PC-3 (cell line): ENCODE measurements at regions of chr19 and their contacts with region 1.

Region 1: GRCh38 chr19:10478903-10479384 is 24.2 kb downstream of the KEAP1 start:
- DNase-seq: peak; percentile 59
- ATAC-seq: peak; percentile 70
- H3K4me3 ChIP-seq: no peak overlapping the region
- H3K27ac ChIP-seq: no peak overlapping the region
- H3K4me1 ChIP-seq: no peaks in the 10 kb centered on the region
- H3K27me3 ChIP-seq: no peaks in the 10 kb centered on the region
- CTCF ChIP-seq: peak; percentile 32; the same call in 1 of the 2 replicates

Region 2: GRCh38 chr19:10403137-10404021 is 75.6 kb before region 1 on chr19 and contains the start of gene CDC37:
- CTCF ChIA-PET with region 1: no interaction called
- POLR2A ChIA-PET with region 1: no interaction called
- intact Hi-C with region 1: loop called (anchors 2 kb)
- DNase-seq: peak; percentile 99
- ATAC-seq: peak; percentile 83
- H3K4me3 ChIP-seq: peak within 1 kb of the TSS; percentile 98
- H3K27ac ChIP-seq: peak within 1 kb of the TSS; percentile 17
- H3K4me1 ChIP-seq: peaks cover 21% of the 10 kb centered on the region
- H3K27me3 ChIP-seq: no peaks in the 10 kb centered on the region
- CTCF ChIP-seq: no peak
- total RNA-seq, gene CDC37: 560 and 709 TPM in 2 replicates

Region 3: DNA sequence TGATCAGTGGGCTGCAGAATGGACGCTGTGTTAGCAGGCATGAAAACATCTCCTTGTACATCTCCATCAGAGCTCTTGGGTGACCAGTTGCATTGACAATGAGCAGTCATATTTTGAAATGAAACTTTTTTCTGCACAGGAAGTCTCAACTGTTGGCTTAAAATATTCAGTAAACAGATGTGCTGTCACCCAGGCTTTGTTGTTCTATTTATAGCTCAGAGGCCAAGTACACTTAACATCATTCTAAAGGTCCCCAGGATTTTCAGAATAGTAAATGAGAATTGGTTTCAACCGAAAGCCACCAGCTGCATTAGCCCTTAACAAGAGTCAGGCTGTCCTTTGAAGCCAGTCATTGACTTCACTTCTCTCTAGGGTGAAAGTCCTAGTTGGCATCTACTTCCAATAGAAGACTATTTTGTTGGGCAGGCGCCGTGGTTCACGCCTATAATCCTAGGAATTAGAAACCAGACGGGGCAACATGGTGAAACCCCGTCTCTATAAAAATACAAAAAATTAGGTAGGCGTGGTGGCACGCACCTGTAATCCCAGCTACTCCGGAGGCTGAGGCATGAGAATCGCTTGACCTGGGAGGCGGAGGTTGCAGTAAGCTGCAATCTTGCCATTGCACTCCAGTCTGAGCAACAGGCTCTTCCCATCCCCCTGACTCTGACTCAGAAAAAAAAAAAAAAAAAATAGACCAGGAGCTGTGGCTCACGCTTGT is 66.5 kb before region 1 on chr19:
- CTCF ChIA-PET with region 1: no interaction called
- POLR2A ChIA-PET with region 1: interaction called, 13 read pairs
- intact Hi-C with region 1: no loop called
- DNase-seq: no peak
- ATAC-seq: no peak
- H3K4me3 ChIP-seq: no peak overlapping the region
- H3K27ac ChIP-seq: no peak overlapping the region
- H3K4me1 ChIP-seq: peaks cover 6% of the 10 kb centered on the region; the same call in 1 of the 2 replicates
- H3K27me3 ChIP-seq: peaks cover 5% of the 10 kb centered on the region
- CTCF ChIP-seq: no peak

Region 4: DNA sequence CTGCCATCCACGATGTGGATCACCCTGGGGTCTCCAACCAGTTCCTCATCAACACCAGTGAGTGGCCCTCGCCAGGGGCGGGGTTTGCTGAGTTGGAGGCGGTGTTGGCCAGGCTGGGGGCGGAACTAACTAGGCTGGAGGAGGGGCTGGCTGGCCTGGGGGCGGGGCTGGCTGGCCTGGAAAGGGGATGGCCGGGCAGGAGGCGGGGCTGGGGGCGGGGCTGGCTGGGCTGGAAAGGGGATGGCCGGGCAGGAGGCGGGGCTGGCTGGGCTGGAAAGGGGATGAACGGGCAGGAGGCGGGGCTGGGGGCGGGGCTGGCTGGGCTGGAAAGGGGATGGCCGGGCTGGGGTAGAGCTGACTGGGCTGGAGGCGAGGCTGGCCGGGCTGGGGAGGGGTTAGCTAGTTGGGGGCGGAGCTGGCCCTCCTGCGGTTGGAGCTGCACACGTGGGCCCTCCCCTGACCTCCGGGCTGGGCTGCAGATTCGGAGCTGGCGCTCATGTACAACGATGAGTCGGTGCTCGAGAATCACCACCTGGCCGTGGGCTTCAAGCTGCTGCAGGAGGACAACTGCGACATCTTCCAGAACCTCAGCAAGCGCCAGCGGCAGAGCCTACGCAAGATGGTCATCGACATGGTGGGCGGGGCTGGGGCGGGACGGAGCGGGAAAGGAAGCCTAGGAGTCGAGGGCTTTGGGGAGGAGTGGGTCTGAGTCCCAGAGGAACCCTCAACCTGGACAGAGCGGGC is 17.7 kb before region 1 on chr19:
- CTCF ChIA-PET with region 1: interaction called, 13 read pairs
- POLR2A ChIA-PET with region 1: no interaction called
- intact Hi-C with region 1: no loop called
- DNase-seq: peak; percentile 94
- ATAC-seq: peak; percentile 100
- H3K4me3 ChIP-seq: peak overlapping the region; percentile 47; the same call in 1 of the 2 replicates
- H3K27ac ChIP-seq: no peak overlapping the region
- H3K4me1 ChIP-seq: 0 out of 2 replicates have a peak, but pooled peaks cover 5% of the 10 kb centered on the region
- H3K27me3 ChIP-seq: no peaks in the 10 kb centered on the region
- CTCF ChIP-seq: no peak

Region 5: DNA sequence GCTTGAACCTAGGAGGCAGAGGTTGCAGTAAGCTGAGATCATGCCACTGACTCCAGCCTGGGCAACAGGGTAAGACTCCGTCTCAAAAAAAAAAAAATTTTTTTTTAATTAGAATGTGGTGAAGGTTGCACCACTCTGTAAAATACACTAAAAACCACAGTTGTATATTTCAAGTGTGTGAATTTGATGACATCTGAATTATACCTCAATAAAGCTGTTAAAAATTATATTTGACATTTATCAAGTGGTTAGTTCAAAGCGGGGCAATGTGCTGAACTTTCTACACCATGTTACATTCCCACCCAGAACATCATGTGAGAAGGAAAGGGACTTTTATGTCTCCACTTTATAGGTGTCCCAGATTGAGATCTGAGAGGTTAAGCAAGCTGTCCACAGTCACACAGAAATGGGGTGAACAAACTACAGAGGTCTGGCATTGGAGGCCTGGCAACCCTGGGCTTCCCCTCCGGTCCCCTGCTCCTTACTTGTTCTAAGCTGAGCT is 44.2 kb after region 1 on chr19:
- CTCF ChIA-PET with region 1: no interaction called
- POLR2A ChIA-PET with region 1: interaction called, 28 read pairs
- intact Hi-C with region 1: no loop called
- DNase-seq: no peak
- ATAC-seq: no peak
- H3K4me3 ChIP-seq: no peak overlapping the region
- H3K27ac ChIP-seq: no peak overlapping the region
- H3K4me1 ChIP-seq: peaks cover 7% of the 10 kb centered on the region; the same call in 1 of the 2 replicates
- H3K27me3 ChIP-seq: no peaks in the 10 kb centered on the region
- CTCF ChIP-seq: no peak

Region 6: DNA sequence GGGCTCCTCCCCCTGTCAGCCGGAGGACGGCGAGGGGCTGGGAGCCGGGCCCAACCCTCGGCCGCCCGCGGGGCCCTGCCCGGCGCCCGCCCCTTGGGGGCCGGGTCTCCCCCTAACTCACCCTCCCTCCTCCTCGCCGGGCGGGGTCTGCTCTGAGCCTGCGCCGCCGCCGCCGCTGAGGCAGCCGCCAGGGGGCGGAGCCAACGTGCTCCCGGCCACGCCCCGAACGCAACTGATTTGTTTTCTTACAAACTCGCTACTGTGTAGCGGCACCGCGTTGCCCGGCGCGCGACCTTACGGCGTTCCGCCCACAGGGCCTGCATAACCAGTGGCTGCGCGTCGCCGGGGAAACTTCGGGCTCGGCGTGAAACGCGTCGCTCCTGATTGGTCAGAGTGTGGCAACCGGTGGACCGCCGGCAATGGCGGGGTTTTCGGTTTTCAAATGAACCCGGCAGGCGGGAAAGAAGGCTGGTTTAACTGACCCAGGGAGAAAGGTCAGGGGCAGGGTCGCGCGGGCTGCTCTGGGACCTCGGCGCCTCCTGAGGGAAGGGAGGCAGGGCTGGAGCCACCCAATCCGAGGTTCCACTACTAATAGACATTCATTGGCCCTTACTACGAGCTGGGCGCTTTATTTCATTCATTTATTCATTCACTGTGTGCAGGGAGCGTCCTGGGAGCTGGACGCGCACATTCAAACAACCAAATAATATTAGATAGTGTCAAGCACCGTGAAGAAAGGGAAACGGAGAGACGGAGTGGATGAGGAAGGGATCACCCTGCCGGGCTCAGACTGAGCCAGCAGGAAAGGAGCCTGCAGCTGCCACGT is 90.1 kb after region 1 on chr19 and contains the start of gene CDKN2D:
- CTCF ChIA-PET with region 1: no interaction called
- POLR2A ChIA-PET with region 1: no interaction called
- intact Hi-C with region 1: loop called (anchors 1 kb)
- DNase-seq: peak; percentile 100
- ATAC-seq: peak; percentile 87
- H3K4me3 ChIP-seq: peak within 1 kb of the TSS; percentile 72
- H3K27ac ChIP-seq: peak within 1 kb of the TSS; percentile 84
- H3K4me1 ChIP-seq: peaks cover 32% of the 10 kb centered on the region
- H3K27me3 ChIP-seq: no peaks in the 10 kb centered on the region
- CTCF ChIP-seq: no peak
- total RNA-seq, gene CDKN2D: 17.1 and 22.5 TPM in 2 replicates

Region 7: GRCh38 chr19:10644260-10645007 is 165.5 kb after region 1 on chr19:
- CTCF ChIA-PET with region 1: no interaction called
- POLR2A ChIA-PET with region 1: interaction called, 6 read pairs
- intact Hi-C with region 1: loop called (anchors 10 kb)
- DNase-seq: peak; percentile 83
- ATAC-seq: peak; percentile 98
- H3K4me3 ChIP-seq: no peak overlapping the region
- H3K27ac ChIP-seq: no peak overlapping the region
- H3K4me1 ChIP-seq: no peaks in the 10 kb centered on the region
- H3K27me3 ChIP-seq: no peaks in the 10 kb centered on the region
- CTCF ChIP-seq: peak; percentile 92